ENCODE measurements at regions of chr13 and their contacts with region 1.

Region 1: DNA sequence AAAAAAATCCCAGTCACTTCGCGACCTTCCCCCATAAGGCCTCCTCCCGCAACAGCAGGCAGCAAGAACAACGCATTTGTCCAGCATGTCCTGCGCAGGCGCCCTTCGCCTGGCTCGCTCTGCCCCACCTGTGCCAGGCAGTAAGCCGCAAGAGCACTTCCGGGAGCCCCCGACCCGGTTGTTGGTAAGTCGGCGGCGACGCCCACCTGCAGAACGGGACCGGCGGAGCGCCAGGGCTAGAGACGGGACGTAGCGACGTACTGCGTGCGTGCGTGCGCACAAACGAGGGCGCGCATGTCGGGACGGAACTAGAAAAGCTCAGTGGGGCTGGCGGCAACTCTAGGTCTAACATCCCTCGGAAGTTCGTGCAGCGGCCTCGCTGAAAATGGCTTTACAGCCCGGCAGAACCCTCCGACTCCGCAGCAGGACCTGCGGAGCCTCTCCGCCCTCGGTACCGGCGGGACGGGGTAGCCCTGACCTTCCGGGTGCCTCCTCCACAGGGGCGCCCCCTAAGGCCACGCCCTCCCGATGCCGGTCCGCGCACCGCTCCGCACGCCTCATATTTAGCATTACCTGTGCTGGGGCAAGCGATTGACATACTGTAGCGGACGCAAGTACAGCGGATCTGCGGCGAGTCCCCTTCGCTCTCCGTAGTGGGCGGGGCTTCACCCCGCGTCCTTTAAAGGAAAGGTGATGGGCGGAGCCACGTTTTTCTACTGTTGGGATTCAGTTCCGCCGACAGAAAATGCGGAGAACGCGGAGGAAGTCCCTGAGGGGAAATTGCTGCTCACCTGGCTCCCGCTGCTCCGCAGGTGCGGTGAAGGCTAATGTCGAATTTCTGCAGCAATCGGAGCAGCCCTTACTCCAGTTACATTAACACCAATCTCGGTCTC is at the start of gene MTIF3:
- DNase-seq: peak; percentile 94
- ATAC-seq: peak; percentile 96
- H3K4me3 ChIP-seq: peak within 1 kb of the TSS; percentile 67 to 89 (median 74)
- H3K27ac ChIP-seq: peak within 1 kb of the TSS; percentile 95
- H3K4me1 ChIP-seq: peaks cover 36% of the 10 kb centered on the region
- H3K27me3 ChIP-seq: no peaks in the 10 kb centered on the region; a peak in 1 of 5 replicates
- CTCF ChIP-seq: peak; percentile 40
- EP300 ChIP-seq: 0 out of 4 replicates have a peak, but pooled peaks of 1 of the 2 experiments have one; percentile 28
- POLR2A ChIP-seq: peak; percentile 75 to 97
- RAD21 ChIP-seq: no peak
- total RNA-seq, gene MTIF3: 40.6 and 59.2 TPM in 2 replicates

Region 2: GRCh38 chr13:26872525-26873385 is 577.4 kb before region 1 on chr13:
- CTCF ChIA-PET with region 1: no interaction called
- POLR2A ChIA-PET with region 1: no interaction called
- in situ Hi-C with region 1: no loop called
- intact Hi-C with region 1: no loop called
- DNase-seq: peak; percentile 31
- ATAC-seq: peak; percentile 96
- H3K4me3 ChIP-seq: no peak overlapping the region
- H3K27ac ChIP-seq: no peak overlapping the region
- H3K4me1 ChIP-seq: no peaks in the 10 kb centered on the region
- H3K27me3 ChIP-seq: no peaks in the 10 kb centered on the region
- CTCF ChIP-seq: peak; percentile 85
- EP300 ChIP-seq: no peak
- POLR2A ChIP-seq: no peak
- RAD21 ChIP-seq: peak; percentile 53

Region 3: GRCh38 chr13:27406178-27406939 is 43.8 kb before region 1 on chr13:
- CTCF ChIA-PET with region 1: no interaction called
- POLR2A ChIA-PET with region 1: interaction called, 27 read pairs
- in situ Hi-C with region 1: no loop called
- intact Hi-C with region 1: no loop called
- DNase-seq: peak; percentile 43
- ATAC-seq: no peak
- H3K4me3 ChIP-seq: no peak overlapping the region
- H3K27ac ChIP-seq: no peak overlapping the region
- H3K4me1 ChIP-seq: peaks cover 59% of the 10 kb centered on the region
- H3K27me3 ChIP-seq: no peaks in the 10 kb centered on the region
- CTCF ChIP-seq: peak; percentile 64
- EP300 ChIP-seq: no peak
- POLR2A ChIP-seq: no peak
- RAD21 ChIP-seq: peak; percentile 35; the same call in 1 of the 2 replicates

Measured in HepG2 (cell line).